ENCODE measurements at regions of chr4 and their contacts with region 1.

Region 1: DNA sequence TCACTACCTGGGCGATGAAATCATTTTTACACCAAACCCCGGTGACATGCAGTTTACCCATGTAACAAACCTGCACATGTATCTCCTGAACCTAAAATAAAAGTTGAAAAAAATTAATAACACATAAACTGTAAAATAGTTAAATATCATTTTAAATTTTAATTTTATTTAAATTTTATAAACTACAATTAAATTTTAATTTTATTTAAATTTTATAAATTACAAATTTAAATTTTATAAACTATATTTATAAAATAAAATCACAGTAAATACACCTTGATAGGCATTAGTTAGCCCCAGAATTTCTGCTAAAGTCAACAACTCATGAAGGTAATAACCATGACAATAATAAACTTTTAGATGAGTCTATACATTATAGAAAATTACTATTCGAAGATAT is 755.6 kb upstream of the LCORL start:
- DNase-seq: no peak
- ATAC-seq: no peak
- H3K4me3 ChIP-seq: no peak overlapping the region
- H3K27ac ChIP-seq: no peak overlapping the region
- H3K4me1 ChIP-seq: no peaks in the 10 kb centered on the region
- H3K27me3 ChIP-seq: no peaks in the 10 kb centered on the region
- CTCF ChIP-seq: no peak
- POLR2A ChIP-seq: no peak
- RAD21 ChIP-seq: no peak

Region 2: DNA sequence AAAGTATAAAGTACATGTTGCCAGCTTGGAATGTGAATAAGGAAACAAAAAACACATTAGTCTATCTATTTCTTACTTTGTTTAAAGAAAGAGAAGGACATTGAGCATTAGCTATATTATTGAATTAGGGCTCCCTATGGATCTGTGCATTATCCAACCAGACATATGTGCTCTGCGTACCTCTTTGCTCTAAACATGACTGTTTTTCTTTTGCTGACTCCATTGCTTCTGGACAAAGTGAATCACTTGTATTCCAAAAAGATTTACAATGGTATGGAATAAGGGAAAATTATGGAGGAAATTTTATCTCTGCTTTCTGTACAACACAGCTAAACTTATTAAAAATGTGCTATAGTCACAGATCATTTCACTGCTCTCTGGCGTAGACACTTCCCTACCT is 27.8 kb before region 1 on chr4:
- CTCF ChIA-PET with region 1: no interaction called
- POLR2A ChIA-PET with region 1: no interaction called
- RAD21 ChIA-PET with region 1: no interaction called
- intact Hi-C with region 1: loop called (anchors 2 kb)
- DNase-seq: no peak
- ATAC-seq: no peak
- H3K4me3 ChIP-seq: no peak overlapping the region
- H3K27ac ChIP-seq: no peak overlapping the region
- H3K4me1 ChIP-seq: no peaks in the 10 kb centered on the region
- H3K27me3 ChIP-seq: no peaks in the 10 kb centered on the region
- CTCF ChIP-seq: no peak
- POLR2A ChIP-seq: no peak
- RAD21 ChIP-seq: no peak

Region 3: DNA sequence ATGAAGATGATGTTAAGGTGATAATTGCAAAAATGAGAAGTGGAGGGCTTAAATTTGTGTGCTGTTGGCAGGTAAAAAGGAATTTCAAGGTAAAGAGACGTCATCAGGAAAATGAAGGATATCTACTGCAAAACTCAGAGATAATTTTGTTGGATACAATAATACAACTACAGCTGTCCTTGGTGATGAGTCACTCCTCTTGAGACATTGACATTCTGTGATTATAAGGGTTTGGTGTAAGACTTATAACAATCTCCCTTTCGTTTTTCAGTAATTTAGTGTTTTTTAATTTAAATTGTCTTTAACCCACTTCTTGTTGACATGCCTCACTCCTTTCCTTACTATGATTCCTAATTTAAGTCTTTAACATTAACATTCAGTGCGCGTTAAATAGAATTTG is 400.4 kb after region 1 on chr4:
- CTCF ChIA-PET with region 1: no interaction called
- POLR2A ChIA-PET with region 1: no interaction called
- RAD21 ChIA-PET with region 1: no interaction called
- intact Hi-C with region 1: no loop called
- DNase-seq: no peak
- ATAC-seq: no peak
- H3K4me3 ChIP-seq: no peak overlapping the region
- H3K27ac ChIP-seq: no peak overlapping the region
- H3K4me1 ChIP-seq: no peaks in the 10 kb centered on the region
- H3K27me3 ChIP-seq: no peaks in the 10 kb centered on the region
- CTCF ChIP-seq: no peak
- POLR2A ChIP-seq: no peak
- RAD21 ChIP-seq: no peak

Region 4: GRCh38 chr4:19346636-19347035 is 569.4 kb after region 1 on chr4:
- CTCF ChIA-PET with region 1: no interaction called
- POLR2A ChIA-PET with region 1: no interaction called
- RAD21 ChIA-PET with region 1: no interaction called
- intact Hi-C with region 1: no loop called
- DNase-seq: no peak
- ATAC-seq: no peak
- H3K4me3 ChIP-seq: no peak overlapping the region
- H3K27ac ChIP-seq: no peak overlapping the region
- H3K4me1 ChIP-seq: no peaks in the 10 kb centered on the region
- H3K27me3 ChIP-seq: no peaks in the 10 kb centered on the region
- CTCF ChIP-seq: no peak
- POLR2A ChIP-seq: no peak
- RAD21 ChIP-seq: no peak

Measured in HCT116 (cell line).